ENCODE measurements at regions of chr1 and their contacts with region 1.

Region 1: GRCh38 chr1:65067491-65068201 is 80.4 kb upstream of the AK4 start:
- DNase-seq: peak; percentile 91
- H3K4me3 ChIP-seq: peak overlapping the region; percentile 84
- H3K27ac ChIP-seq: peak overlapping the region; percentile 68
- H3K4me1 ChIP-seq: peaks cover 15% of the 10 kb centered on the region; the same call in 1 of the 2 replicates
- H3K27me3 ChIP-seq: no peaks in the 10 kb centered on the region

Region 2: GRCh38 chr1:64624218-64624713 is 443.4 kb before region 1 on chr1:
- in situ Hi-C with region 1: no loop called
- DNase-seq: peak; percentile 57
- H3K4me3 ChIP-seq: no peak overlapping the region
- H3K27ac ChIP-seq: no peak overlapping the region
- H3K4me1 ChIP-seq: peaks cover 12% of the 10 kb centered on the region
- H3K27me3 ChIP-seq: no peaks in the 10 kb centered on the region

Region 3: GRCh38 chr1:64856553-64856952 is 211.1 kb before region 1 on chr1:
- in situ Hi-C with region 1: no loop called
- DNase-seq: no peak
- H3K4me3 ChIP-seq: no peak overlapping the region
- H3K27ac ChIP-seq: no peak overlapping the region
- H3K4me1 ChIP-seq: no peaks in the 10 kb centered on the region
- H3K27me3 ChIP-seq: no peaks in the 10 kb centered on the region

Region 4: GRCh38 chr1:65209005-65209885 is 141.6 kb after region 1 on chr1:
- in situ Hi-C with region 1: loop called (anchors 25 kb)
- DNase-seq: peak; percentile 58
- H3K4me3 ChIP-seq: no peak overlapping the region
- H3K27ac ChIP-seq: no peak overlapping the region
- H3K4me1 ChIP-seq: no peaks in the 10 kb centered on the region
- H3K27me3 ChIP-seq: no peaks in the 10 kb centered on the region

Measured in GM23248 (cell line).